Aorta (tissue), 5 donors: ENCODE measurements at regions of chr1 and their contacts with region 1.

Region 1: DNA sequence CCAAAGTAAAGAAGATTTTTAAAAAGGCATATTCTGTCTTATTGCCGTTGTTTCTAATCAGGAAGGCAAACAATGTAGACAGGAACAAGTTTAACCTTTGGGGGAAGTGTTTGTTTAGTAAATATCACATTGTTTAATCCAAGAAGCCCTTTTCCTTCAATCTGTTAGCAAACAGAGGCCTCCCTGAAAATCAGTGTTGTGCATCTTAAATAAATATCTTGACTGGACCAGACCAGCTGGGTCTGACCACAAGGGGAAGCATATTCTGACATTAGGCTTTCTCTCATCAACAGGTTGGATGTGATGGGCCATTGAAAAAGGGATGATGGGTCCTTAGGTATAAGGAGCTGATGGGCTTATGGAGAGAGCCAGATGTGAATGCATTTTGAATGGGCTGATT is 81.8 kb upstream of the SGIP1 start:
- DNase-seq: no peak
- ATAC-seq: no peak
- H3K4me3 ChIP-seq: no peak overlapping the region
- H3K27ac ChIP-seq: no peak overlapping the region
- H3K4me1 ChIP-seq: peaks cover 2 to 4% of the 10 kb centered on the region in 2 donors
- H3K27me3 ChIP-seq: no peaks in the 10 kb centered on the region

Region 2: GRCh38 chr1:66495495-66495894 is 43.3 kb after region 1 on chr1:
- intact Hi-C with region 1: loop called (anchors 5 kb)
- DNase-seq: no peak
- ATAC-seq: no peak
- H3K4me3 ChIP-seq: no peak overlapping the region
- H3K27ac ChIP-seq: no peak overlapping the region
- H3K4me1 ChIP-seq: no peaks in the 10 kb centered on the region
- H3K27me3 ChIP-seq: no peaks in the 10 kb centered on the region

Region 3: DNA sequence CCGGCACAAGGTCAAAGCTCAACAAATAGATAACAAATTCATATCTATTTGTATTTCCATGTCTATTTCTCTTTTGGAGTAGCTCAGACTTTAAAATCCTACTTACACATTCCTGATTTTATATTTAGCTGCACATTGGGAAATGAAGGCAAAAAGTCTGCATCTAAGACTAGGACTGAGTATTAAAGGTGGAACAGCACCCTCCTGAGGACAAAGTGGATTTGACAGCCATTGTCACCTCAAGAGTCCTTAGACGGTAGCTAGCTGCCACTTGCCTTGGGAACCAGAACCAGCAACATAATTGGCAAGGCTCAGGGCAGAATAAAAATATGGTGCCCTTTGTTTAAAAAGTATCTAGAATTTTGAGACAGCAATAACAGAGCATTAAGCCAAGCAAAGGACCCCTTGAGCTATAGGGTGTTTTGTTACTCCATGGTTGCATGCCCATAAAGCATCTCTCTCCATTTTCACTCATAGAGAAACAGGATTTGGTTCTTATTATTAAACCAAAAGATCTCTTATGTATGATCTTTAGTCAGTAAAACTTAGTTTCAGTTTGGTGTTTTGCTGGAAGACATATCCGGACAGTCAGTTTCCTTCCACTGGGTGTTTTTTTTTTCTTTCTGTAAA is 51.8 kb after region 1 on chr1:
- intact Hi-C with region 1: loop called (anchors 5 kb)
- DNase-seq: peak in 1 of 2 donors; percentile 45
- ATAC-seq: peak; percentile 68
- H3K4me3 ChIP-seq: no peak overlapping the region
- H3K27ac ChIP-seq: no peak overlapping the region
- H3K4me1 ChIP-seq: no peaks in the 10 kb centered on the region
- H3K27me3 ChIP-seq: no peaks in the 10 kb centered on the region

Region 4: GRCh38 chr1:66893703-66894102 is 441.5 kb after region 1 on chr1:
- intact Hi-C with region 1: no loop called
- DNase-seq: no peak
- ATAC-seq: no peak
- H3K4me3 ChIP-seq: no peak overlapping the region
- H3K27ac ChIP-seq: no peak overlapping the region
- H3K4me1 ChIP-seq: no peaks in the 10 kb centered on the region
- H3K27me3 ChIP-seq: no peaks in the 10 kb centered on the region